Transverse colon (tissue), 4 donors: ENCODE measurements at regions of chr14 and their contacts with region 1.

Region 1: DNA sequence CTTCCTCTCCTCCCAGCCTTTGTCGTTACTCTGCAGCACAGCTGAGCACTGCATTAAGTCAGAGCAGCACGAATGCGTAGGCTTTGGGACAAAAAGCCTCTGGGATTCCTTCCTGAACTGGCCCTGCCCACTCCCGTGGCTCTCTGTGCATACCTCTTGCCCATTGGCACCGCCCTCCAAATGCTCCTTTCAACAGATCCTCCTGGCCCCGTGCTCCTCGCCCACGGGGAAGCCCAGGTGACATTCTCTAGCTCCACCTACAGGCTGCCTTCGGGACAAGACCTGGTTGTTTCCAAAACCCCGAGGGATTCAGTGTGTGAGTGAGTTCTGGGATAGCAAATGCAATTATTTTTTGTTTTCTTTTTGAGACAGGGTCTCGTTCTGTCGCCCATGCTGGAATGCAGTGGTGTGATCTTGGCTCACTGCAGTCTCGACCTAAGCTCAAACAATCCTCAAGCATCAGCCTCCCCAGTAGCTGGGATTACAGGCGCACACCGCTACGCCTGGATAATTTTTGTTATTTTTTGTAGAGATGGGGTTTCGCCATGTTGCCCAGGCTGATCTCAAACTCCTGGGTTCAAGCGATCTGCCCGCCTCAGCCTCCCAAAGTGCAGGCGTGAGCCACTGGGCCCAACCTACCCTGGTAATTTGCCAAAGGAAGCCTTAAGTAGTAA is 17.9 kb upstream of the TDRD9 start:
- DNase-seq: peak; percentile 89
- H3K4me3 ChIP-seq: peak overlapping the region in 1 of 4 donors; percentile 16
- H3K27ac ChIP-seq: peak overlapping the region in 3 of 4 donors; percentile 38 to 53 (median 40)
- H3K4me1 ChIP-seq: peaks cover 0 to 11% (median 7%) of the 10 kb centered on the region in 4 donors
- H3K27me3 ChIP-seq: no peaks in the 10 kb centered on the region
- CTCF ChIP-seq: peak; percentile 83 to 88 (median 83)
- EP300 ChIP-seq: no peak
- POLR2A ChIP-seq: no peak

Region 2: DNA sequence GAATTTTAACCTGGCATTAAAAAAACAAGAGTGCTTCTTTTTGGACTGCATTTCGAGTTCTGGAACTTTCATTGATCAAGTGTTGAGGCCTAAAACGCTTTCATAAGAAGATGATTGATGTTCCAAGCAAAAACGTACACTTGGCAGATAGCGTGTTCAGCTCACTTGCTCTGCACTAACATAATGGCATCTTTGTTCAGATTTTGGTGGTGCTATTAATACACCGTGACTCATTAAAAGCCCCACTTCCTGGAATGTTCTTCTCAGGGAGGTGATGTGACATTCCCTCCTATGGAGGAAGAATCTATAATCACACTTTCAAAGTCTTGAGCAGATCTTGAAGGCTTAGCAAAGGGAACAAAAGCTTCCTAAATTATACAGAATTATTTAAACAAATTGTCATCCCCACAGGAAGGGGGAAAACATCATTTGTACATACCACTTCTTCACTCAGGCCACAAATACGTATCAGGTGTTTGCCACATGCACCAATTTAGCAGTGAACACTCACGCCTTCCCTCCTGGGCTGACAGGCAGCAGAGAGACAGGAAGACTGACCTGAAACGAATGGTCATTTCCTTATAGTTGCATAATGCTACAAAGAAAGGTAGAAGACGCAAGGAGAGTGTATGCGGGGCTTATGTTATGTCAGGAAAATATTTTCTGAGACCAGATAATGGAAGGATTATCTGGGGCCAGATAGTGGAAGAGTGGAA is 1839.0 kb before region 1 on chr14:
- in situ Hi-C with region 1: no loop called
- intact Hi-C with region 1: loop called (anchors 5 kb)
- DNase-seq: no peak
- H3K4me3 ChIP-seq: no peak overlapping the region
- H3K27ac ChIP-seq: no peak overlapping the region
- H3K4me1 ChIP-seq: no peaks in the 10 kb centered on the region
- H3K27me3 ChIP-seq: no peaks in the 10 kb centered on the region
- CTCF ChIP-seq: no peak
- EP300 ChIP-seq: no peak
- POLR2A ChIP-seq: no peak

Region 3: DNA sequence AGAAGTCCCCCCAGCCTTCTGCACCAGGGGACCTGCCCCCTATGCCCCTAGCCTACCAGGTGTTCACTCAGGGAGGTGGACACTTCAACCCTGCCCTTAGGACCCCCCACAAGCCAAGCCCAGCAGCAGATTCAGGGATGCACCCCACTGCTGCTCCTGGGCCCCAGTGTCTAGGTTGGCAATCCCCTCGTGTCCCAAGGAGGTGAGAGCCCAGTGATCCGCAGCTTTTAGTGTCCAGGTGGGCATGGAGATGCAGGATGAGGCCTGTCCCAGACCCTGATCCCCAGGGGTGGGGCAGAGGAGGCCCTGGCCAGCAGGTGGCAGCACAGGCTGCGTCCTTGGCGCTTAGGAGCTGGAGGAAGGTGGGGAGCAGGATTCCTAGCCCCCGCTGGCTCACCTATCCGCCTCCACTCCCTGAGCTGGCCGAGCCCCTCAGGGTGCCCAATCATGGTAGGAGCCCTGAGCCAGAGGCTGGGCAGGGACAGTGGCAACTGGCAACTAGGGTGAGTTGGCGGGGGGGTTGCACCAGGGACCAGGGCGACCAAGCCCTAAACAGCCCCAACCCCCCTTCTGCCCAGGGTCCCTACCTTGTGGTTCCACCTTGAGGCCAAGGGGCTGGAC is 391.9 kb before region 1 on chr14:
- in situ Hi-C with region 1: no loop called
- intact Hi-C with region 1: no loop called
- DNase-seq: peak; percentile 80
- H3K4me3 ChIP-seq: no peak overlapping the region
- H3K27ac ChIP-seq: peak overlapping the region; percentile 89 to 95 (median 92)
- H3K4me1 ChIP-seq: peaks cover 31 to 54% (median 41%) of the 10 kb centered on the region in 4 donors
- H3K27me3 ChIP-seq: peaks cover 10% of the 10 kb centered on the region
- CTCF ChIP-seq: peak; percentile 91 to 97 (median 95)
- EP300 ChIP-seq: no peak
- POLR2A ChIP-seq: no peak

Region 4: GRCh38 chr14:103770902-103771301 is 139.5 kb before region 1 on chr14:
- in situ Hi-C with region 1: no loop called
- intact Hi-C with region 1: no loop called
- DNase-seq: no peak
- H3K4me3 ChIP-seq: no peak overlapping the region
- H3K27ac ChIP-seq: no peak overlapping the region
- H3K4me1 ChIP-seq: no peaks in the 10 kb centered on the region
- H3K27me3 ChIP-seq: no peaks in the 10 kb centered on the region
- CTCF ChIP-seq: no peak
- EP300 ChIP-seq: no peak
- POLR2A ChIP-seq: no peak

Region 5: GRCh38 chr14:103808403-103809001 is 101.9 kb before region 1 on chr14:
- in situ Hi-C with region 1: loop called (anchors 5 to 10 kb)
- intact Hi-C with region 1: loop called (anchors 2 kb)
- DNase-seq: peak; percentile 78
- H3K4me3 ChIP-seq: no peak overlapping the region
- H3K27ac ChIP-seq: no peak overlapping the region
- H3K4me1 ChIP-seq: peaks cover 0 to 3% (median 1%) of the 10 kb centered on the region in 4 donors
- H3K27me3 ChIP-seq: no peaks in the 10 kb centered on the region
- CTCF ChIP-seq: peak; percentile 81 to 89 (median 85)
- EP300 ChIP-seq: no peak
- POLR2A ChIP-seq: no peak

Region 6: GRCh38 chr14:103819503-103820307 is 90.7 kb before region 1 on chr14:
- in situ Hi-C with region 1: loop called in 3 of 4 experiments (anchors 5 to 10 kb)
- intact Hi-C with region 1: no loop called
- DNase-seq: peak; percentile 47
- H3K4me3 ChIP-seq: no peak overlapping the region
- H3K27ac ChIP-seq: peak overlapping the region in 2 of 4 donors; percentile 30 to 59
- H3K4me1 ChIP-seq: peaks cover 0 to 22% (median 12%) of the 10 kb centered on the region in 4 donors
- H3K27me3 ChIP-seq: no peaks in the 10 kb centered on the region
- CTCF ChIP-seq: no peak
- EP300 ChIP-seq: no peak
- POLR2A ChIP-seq: no peak